ENCODE measurements at regions of chr11 and their contacts with region 1.

Region 1: DNA sequence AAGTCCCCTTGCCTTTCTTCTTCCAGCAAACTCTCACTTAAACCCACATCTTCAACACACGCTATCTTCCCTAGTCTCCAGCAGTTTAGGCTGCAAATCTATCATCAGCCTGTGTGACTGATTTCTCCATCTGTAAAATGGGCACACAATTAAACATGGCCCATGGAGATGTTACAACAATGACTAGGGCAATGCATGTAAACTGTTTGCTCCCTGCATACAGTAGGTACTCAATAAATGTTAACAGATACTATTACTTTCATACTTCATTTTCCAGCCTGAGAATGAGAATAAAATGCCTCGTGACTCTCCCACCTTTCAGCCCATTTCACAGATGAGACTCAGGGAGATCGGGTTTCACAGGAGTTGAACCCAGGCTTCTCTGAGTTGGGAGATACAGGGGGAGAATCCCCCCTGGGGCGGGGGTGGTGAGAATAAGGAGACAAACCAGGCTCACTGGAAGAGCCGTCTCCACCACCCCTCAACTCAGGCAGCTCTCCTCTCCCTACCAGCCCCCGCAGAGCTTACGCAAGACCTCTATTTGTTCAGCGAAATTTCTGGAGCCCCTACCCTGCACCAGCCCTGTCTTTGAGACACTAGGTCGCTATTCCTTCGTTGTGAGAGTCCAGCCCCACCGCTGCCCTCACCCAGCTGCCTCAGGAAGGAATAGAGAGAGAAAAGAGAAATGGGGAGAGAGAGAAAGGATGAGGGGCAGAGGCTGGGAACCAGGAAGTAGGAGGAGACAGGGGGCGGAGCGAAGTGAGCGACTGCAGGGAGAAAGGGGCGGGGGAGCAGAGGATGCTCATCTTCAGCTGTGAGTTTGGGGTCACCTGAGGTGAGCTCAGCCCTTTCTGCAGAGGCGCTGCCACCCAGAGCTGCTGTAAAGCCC is 42.1 kb upstream of the KLHL35 start:
- DNase-seq: no peak

Region 2: DNA sequence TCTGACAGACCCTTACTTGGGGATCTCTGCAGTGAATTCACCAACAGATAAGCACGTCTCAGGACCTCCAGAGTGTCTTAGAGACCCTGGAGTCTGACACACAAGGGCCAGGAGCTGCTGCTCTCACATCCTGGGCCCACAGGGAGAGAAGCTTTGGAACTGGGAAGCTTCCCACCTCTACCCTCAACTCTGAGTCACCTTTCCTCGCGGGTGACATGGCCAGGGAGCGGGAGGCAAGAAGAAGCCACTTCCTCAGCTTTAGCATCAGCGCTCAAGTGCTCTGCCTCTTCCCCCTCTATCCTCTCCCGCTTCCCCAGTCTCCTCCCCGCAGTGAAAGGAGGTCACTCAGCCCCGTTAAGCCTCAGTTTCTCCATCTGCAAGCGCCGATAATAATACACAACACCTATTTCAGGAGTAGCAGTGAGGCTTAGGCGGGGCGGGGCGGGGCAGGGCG is 49.5 kb after region 1 on chr11:
- in situ Hi-C with region 1: loop called (anchors 5 kb)
- DNase-seq: peak; percentile 51

Region 3: DNA sequence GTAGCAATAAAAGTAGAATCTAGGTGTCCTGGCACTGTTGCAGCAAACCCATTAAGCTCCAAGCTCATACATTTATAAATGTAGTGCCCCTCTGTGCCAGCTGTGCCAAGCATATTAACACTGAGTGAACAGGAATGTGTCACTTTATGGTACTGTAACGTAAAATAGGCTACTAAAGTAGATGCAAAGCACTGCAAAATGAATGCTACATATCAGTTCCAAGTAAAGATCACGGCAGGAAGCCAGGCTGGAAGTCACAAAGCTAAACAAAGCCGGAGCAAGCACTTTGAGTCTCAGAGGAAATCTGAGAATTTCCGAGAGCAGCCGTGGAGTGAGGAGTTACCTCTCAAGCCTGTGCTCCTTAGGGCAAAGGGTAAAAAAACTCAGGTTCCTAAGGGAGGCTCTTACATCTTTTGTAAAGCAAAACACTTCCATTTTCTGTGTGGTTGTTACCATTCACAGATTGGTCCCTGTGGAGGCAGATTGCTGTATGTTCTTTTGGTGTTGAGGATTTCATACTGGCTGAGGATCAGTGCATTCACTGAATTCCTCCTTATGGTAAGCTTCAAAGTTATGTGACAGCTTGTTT is 645.5 kb after region 1 on chr11:
- in situ Hi-C with region 1: no loop called
- DNase-seq: no peak

Measured in G401 (cell line).